Prostate gland (tissue), 2 donors: ENCODE measurements at regions of chr6 and their contacts with region 1.

Region 1: GRCh38 chr6:155174576-155175211 is 89.1 kb upstream of the CLDN20 start:
- DNase-seq: peak; percentile 70
- H3K4me3 ChIP-seq: no peak overlapping the region
- H3K27ac ChIP-seq: no peak overlapping the region
- H3K4me1 ChIP-seq: no peaks in the 10 kb centered on the region
- H3K27me3 ChIP-seq: no peaks in the 10 kb centered on the region
- CTCF ChIP-seq: peak in 3 of 4 experiments; percentile 57 to 76 (median 69)
- POLR2A ChIP-seq: no peak

Region 2: DNA sequence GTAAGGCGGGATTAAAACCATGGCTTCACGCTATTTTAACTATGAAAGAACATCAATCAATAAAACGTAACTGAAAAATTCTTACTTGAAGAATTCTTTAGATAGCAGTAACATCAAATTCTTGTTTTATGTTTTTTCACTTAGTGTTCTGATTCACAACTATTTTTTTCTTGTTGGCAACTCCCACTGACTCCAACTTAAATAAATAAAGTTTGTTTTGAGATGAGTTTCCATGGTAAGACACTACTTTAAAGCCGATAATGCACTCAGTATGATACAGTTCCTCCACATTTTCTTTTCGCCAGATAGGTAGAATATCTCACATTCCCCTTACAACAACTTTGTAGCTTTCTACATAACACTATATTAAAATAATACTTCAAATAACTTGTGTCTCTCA is 631.1 kb before region 1 on chr6:
- intact Hi-C with region 1: no loop called
- DNase-seq: no peak
- H3K4me3 ChIP-seq: no peak overlapping the region
- H3K27ac ChIP-seq: no peak overlapping the region
- H3K4me1 ChIP-seq: no peaks in the 10 kb centered on the region
- H3K27me3 ChIP-seq: no peaks in the 10 kb centered on the region
- CTCF ChIP-seq: no peak
- POLR2A ChIP-seq: no peak

Region 3: DNA sequence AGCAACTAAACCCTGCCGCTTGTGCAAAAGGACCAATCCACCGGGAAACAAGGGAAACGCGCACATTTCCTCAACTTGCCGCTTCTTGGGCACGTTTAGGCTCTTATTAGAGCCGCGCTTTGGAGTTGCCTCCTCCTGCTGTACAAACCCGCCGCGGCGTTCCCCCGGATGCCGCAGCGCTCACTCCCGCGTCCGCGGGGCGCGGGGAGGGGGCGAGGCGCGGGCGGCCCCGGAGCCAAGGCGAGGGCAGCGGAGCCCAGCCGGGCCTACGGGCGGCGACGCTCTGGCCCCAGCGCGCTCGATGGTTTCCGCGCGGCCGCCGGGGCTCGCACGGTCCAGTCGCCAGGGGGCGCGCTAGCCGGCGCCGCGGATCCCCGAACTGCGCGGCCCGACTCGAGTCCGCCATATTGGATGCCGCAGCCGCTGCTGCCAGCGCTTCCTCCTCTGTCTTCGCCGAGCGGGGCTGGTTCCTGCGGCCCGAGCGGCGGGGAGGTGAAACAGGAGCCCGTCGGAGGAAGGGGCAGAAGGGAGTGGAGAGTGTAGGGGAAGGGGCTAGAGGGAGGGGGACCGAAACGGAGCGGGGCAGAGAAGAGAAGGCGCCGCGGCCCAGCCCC is 441.6 kb before region 1 on chr6 and contains the start of gene SCAF8:
- intact Hi-C with region 1: loop called (anchors 10 kb)
- DNase-seq: peak; percentile 67
- H3K4me3 ChIP-seq: peak within 1 kb of the TSS; percentile 99 to 100
- H3K27ac ChIP-seq: peak within 1 kb of the TSS; percentile 100
- H3K4me1 ChIP-seq: no peaks in the 10 kb centered on the region
- H3K27me3 ChIP-seq: no peaks in the 10 kb centered on the region
- CTCF ChIP-seq: peak; percentile 79 to 95 (median 92)
- POLR2A ChIP-seq: peak; percentile 39
- total RNA-seq, gene SCAF8: 42.0 to 53.5 TPM

Region 4: DNA sequence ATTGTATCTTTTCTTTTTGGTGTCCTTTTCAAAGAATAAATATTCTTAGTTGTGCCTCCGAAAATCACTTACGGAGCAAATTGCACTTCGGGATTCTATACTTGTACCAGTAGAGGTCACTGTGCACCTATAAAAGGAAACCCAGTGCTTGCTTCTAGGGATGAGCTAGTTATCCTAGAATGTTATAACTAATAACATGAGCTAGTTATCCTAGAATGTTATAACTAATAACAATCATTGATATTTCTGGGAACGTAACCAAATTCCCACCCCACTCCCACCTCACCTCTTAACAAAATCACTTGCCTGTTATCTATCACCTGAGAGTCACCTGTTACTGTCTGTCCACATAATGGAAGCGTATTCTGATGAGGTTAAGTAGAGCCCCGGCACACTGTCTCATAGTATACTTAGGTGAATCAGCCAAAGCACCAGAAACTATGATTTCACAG is 306.5 kb before region 1 on chr6:
- intact Hi-C with region 1: loop called (anchors 2 kb)
- DNase-seq: peak; percentile 15
- H3K4me3 ChIP-seq: no peak overlapping the region
- H3K27ac ChIP-seq: no peak overlapping the region
- H3K4me1 ChIP-seq: peaks cover 2% of the 10 kb centered on the region
- H3K27me3 ChIP-seq: no peaks in the 10 kb centered on the region
- CTCF ChIP-seq: peak in 3 of 4 experiments; percentile 55 to 75 (median 67)
- POLR2A ChIP-seq: no peak

Region 5: GRCh38 chr6:154928325-154928922 is 246.3 kb before region 1 on chr6:
- intact Hi-C with region 1: loop called (anchors 1 kb)
- DNase-seq: peak; percentile 52
- H3K4me3 ChIP-seq: no peak overlapping the region
- H3K27ac ChIP-seq: no peak overlapping the region
- H3K4me1 ChIP-seq: no peaks in the 10 kb centered on the region
- H3K27me3 ChIP-seq: no peaks in the 10 kb centered on the region
- CTCF ChIP-seq: peak; percentile 28 to 77 (median 69)
- POLR2A ChIP-seq: no peak

Region 6: DNA sequence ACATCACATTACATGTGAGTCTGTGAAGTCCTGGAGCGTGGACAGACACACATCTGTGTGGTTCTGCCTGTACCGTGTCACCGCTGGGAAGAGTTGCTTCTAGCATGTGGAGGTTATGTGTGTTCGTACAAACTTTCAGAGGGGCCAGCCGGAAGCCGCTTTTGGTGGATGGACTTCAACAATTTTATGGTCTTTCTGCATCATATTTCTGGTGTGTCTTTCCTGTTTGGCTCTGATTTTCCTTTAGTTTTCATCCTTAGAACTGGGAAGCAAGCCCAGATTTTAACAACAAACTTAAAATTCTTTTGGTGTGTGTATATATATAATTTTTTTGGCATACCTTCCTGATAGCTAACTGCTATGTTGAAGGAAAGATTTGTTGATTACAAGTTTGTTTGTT is 108.3 kb before region 1 on chr6:
- intact Hi-C with region 1: no loop called
- DNase-seq: no peak
- H3K4me3 ChIP-seq: no peak overlapping the region
- H3K27ac ChIP-seq: no peak overlapping the region
- H3K4me1 ChIP-seq: no peaks in the 10 kb centered on the region
- H3K27me3 ChIP-seq: no peaks in the 10 kb centered on the region
- CTCF ChIP-seq: no peak
- POLR2A ChIP-seq: no peak

Region 7: GRCh38 chr6:155248008-155249001 is 73.6 kb after region 1 on chr6:
- intact Hi-C with region 1: loop called (anchors 1 kb)
- DNase-seq: peak; percentile 59
- H3K4me3 ChIP-seq: no peak overlapping the region
- H3K27ac ChIP-seq: peak overlapping the region; percentile 6 to 8
- H3K4me1 ChIP-seq: no peaks in the 10 kb centered on the region
- H3K27me3 ChIP-seq: no peaks in the 10 kb centered on the region
- CTCF ChIP-seq: peak; percentile 48 to 80 (median 76)
- POLR2A ChIP-seq: no peak